Endothelial cell of umbilical vein (primary cell): ENCODE measurements at regions of chr12 and their contacts with region 1.

Region 1: GRCh38 chr12:7142056-7142644 is 12.0 kb downstream of the CLSTN3 start:
- DNase-seq: peak; percentile 58
- H3K4me3 ChIP-seq: no peak overlapping the region
- H3K27ac ChIP-seq: no peak overlapping the region
- H3K4me1 ChIP-seq: no peaks in the 10 kb centered on the region
- H3K27me3 ChIP-seq: no peaks in the 10 kb centered on the region
- CTCF ChIP-seq: peak; percentile 81 to 86
- POLR2A ChIP-seq: no peak

Region 2: GRCh38 chr12:6104027-6104426 is 1038.1 kb before region 1 on chr12:
- CTCF ChIA-PET with region 1: no interaction called
- POLR2A ChIA-PET with region 1: no interaction called
- dilution Hi-C with region 1: no loop called
- intact Hi-C with region 1: no loop called
- DNase-seq: no peak
- H3K4me3 ChIP-seq: no peak overlapping the region
- H3K27ac ChIP-seq: peak overlapping the region; percentile 23
- H3K4me1 ChIP-seq: peaks cover 32% of the 10 kb centered on the region
- H3K27me3 ChIP-seq: no peaks in the 10 kb centered on the region
- CTCF ChIP-seq: no peak
- POLR2A ChIP-seq: no peak

Region 3: GRCh38 chr12:7162691-7163114 is 20.6 kb after region 1 on chr12:
- CTCF ChIA-PET with region 1: interaction called, 17 read pairs
- POLR2A ChIA-PET with region 1: no interaction called
- dilution Hi-C with region 1: no loop called
- intact Hi-C with region 1: no loop called
- DNase-seq: no peak
- H3K4me3 ChIP-seq: no peak overlapping the region
- H3K27ac ChIP-seq: no peak overlapping the region
- H3K4me1 ChIP-seq: no peaks in the 10 kb centered on the region
- H3K27me3 ChIP-seq: peaks cover 11 to 12% of the 10 kb centered on the region in 2 experiments
- CTCF ChIP-seq: peak; percentile 29 to 51
- POLR2A ChIP-seq: no peak

Region 4: GRCh38 chr12:7188562-7189397 is 46.6 kb after region 1 on chr12:
- CTCF ChIA-PET with region 1: interaction called, 33 read pairs
- POLR2A ChIA-PET with region 1: no interaction called
- dilution Hi-C with region 1: no loop called
- intact Hi-C with region 1: loop called (anchors 1 kb)
- DNase-seq: peak; percentile 95
- H3K4me3 ChIP-seq: peak overlapping the region in 2 of 3 experiments; percentile 64 to 69
- H3K27ac ChIP-seq: peak overlapping the region; percentile 98
- H3K4me1 ChIP-seq: peaks cover 22% of the 10 kb centered on the region
- H3K27me3 ChIP-seq: no peaks in the 10 kb centered on the region
- CTCF ChIP-seq: peak; percentile 87 to 88
- POLR2A ChIP-seq: no peak